Vagina (tissue), 2 donors: ENCODE measurements at regions of chr2 and their contacts with region 1.

Region 1: DNA sequence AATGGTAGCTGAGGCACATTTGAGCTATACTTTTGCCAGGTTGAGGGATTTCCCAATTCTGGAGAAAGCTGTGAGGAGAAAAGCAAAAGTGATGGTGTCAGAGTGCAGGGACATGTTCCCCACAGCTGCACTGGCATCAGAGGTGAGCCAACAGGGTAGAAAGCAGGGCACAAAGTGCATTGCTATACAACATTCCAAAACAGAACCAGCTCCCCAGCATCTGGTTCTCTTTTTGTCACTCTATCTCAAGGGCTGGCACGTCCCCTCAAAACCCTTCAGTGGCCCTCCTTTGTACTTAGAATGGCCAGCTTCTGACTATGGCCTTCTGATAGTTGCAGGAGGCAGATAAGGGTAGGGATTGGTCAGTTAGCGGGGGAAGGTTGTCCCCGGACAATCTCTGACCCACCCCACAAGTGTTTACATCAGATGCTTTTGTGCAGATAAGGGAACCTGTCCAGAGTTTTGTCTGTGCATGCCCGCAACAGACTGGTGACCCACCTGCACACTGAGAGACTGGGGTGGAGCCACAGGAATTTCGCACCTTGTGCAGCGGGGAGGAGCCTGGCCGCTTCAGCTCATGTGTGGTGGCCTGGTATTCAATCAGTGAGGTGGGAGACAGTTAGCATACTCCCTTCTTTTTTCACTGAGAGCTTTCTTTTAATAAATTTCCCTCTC is 31.0 kb upstream of the TMEM17 start:
- DNase-seq: no peak
- H3K4me3 ChIP-seq: no peak overlapping the region
- H3K27ac ChIP-seq: no peak overlapping the region
- H3K4me1 ChIP-seq: no peaks in the 10 kb centered on the region
- H3K27me3 ChIP-seq: no peaks in the 10 kb centered on the region
- CTCF ChIP-seq: no peak
- POLR2A ChIP-seq: no peak

Region 2: DNA sequence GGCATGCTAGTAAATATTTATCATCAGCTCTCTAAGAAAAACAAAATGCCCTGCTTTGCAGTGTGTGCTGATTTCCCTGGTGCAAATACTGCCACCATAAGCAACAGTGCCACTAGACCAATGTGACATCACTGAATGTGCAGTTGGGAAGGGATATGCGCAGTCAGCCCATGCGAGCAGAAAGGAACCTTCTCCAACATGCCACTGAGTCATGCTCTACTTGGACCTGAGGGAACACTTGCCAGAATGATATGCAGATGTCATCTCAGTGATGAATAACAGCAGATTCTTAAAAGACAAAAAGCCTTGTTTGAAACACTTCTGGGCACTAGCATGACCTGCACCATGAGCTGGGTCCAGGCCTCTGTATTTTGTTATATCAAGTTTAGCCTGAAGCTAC is 1710.9 kb before region 1 on chr2:
- intact Hi-C with region 1: loop called (anchors 5 kb)
- DNase-seq: no peak
- H3K4me3 ChIP-seq: no peak overlapping the region
- H3K27ac ChIP-seq: no peak overlapping the region
- H3K4me1 ChIP-seq: no peaks in the 10 kb centered on the region
- H3K27me3 ChIP-seq: no peaks in the 10 kb centered on the region
- CTCF ChIP-seq: no peak
- POLR2A ChIP-seq: no peak